H1 (cell line): ENCODE measurements at regions of chr16 and their contacts with region 1.

Region 1: GRCh38 chr16:27639561-27640276 is 89.8 kb downstream of the KATNIP start:
- DNase-seq: peak in 1 of 2 experiments; percentile 55
- H3K4me3 ChIP-seq: no peak overlapping the region
- H3K27ac ChIP-seq: no peak overlapping the region
- H3K4me1 ChIP-seq: peaks cover 0 to 9% (median 5%) of the 10 kb centered on the region in 4 experiments; a peak in 6 of 7 replicates
- H3K27me3 ChIP-seq: no peaks in the 10 kb centered on the region
- CTCF ChIP-seq: peak; percentile 60 to 84 (median 75)
- EP300 ChIP-seq: no peak
- POLR2A ChIP-seq: no peak
- RAD21 ChIP-seq: peak; percentile 77 to 78

Region 2: DNA sequence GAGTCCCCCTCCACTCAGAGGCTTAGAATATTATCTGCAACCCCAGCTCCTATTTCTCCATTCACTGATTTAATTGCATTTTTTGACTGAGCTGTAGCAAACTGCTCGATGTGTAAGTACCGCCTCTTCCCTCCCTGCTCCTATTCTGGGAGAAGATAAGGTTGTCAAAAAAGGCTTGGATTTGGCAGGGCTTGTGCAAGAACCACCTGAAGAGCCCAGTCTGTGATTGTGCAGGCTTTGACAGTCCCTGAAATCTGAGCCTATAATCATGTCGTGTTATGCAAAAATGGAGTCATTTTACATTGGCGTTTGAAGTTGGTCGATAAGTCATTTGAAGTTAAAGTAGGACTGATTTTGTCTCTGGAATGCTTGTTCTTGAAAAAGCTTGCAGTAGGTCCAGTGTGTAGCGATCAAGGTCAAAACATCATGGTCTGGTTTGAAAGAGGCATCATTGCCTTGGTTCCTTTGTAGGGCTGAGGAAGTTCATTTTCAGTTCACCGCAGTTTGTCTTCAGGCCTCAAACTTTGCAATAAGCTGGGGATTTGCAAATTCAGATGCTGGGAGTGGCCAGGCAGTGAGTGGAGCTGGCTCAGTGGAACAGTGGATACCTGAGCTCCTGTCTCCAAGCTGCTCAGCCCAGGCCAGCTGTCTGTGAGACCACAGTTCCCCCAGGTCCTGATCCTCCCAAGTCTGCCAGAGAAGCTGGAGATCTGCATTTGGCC is 21.0 kb before region 1 on chr16:
- CTCF ChIA-PET with region 1: interaction called, 14 read pairs
- POLR2A ChIA-PET with region 1: no interaction called
- DNase-seq: no peak
- H3K4me3 ChIP-seq: no peak overlapping the region
- H3K27ac ChIP-seq: no peak overlapping the region
- H3K4me1 ChIP-seq: peaks cover 0 to 2% (median 0%) of the 10 kb centered on the region in 4 experiments; a peak in 1 of 7 replicates
- H3K27me3 ChIP-seq: no peaks in the 10 kb centered on the region
- CTCF ChIP-seq: no peak
- EP300 ChIP-seq: no peak
- POLR2A ChIP-seq: no peak
- RAD21 ChIP-seq: no peak

Region 3: GRCh38 chr16:27628241-27628942 is 11.3 kb before region 1 on chr16:
- CTCF ChIA-PET with region 1: interaction called, 35 read pairs
- POLR2A ChIA-PET with region 1: interaction called, 4 read pairs
- DNase-seq: no peak
- H3K4me3 ChIP-seq: no peak overlapping the region
- H3K27ac ChIP-seq: no peak overlapping the region
- H3K4me1 ChIP-seq: peaks cover 0 to under 1% (median 0%) of the 10 kb centered on the region in 4 experiments; a peak in 1 of 7 replicates
- H3K27me3 ChIP-seq: no peaks in the 10 kb centered on the region
- CTCF ChIP-seq: no peak
- EP300 ChIP-seq: no peak
- POLR2A ChIP-seq: no peak
- RAD21 ChIP-seq: no peak

Region 4: GRCh38 chr16:27654212-27654611 is 14.5 kb after region 1 on chr16:
- CTCF ChIA-PET with region 1: interaction called, 11 read pairs
- POLR2A ChIA-PET with region 1: no interaction called
- DNase-seq: no peak
- H3K4me3 ChIP-seq: no peak overlapping the region
- H3K27ac ChIP-seq: no peak overlapping the region
- H3K4me1 ChIP-seq: peaks cover 2 to 8% (median 3%) of the 10 kb centered on the region in 4 experiments; a peak in 5 of 7 replicates
- H3K27me3 ChIP-seq: no peaks in the 10 kb centered on the region
- CTCF ChIP-seq: no peak
- EP300 ChIP-seq: no peak
- POLR2A ChIP-seq: no peak
- RAD21 ChIP-seq: no peak

Region 5: GRCh38 chr16:27671410-27671809 is 31.7 kb after region 1 on chr16:
- CTCF ChIA-PET with region 1: interaction called, 11 read pairs
- POLR2A ChIA-PET with region 1: no interaction called
- DNase-seq: no peak
- H3K4me3 ChIP-seq: no peak overlapping the region
- H3K27ac ChIP-seq: no peak overlapping the region
- H3K4me1 ChIP-seq: no peaks in the 10 kb centered on the region; a peak in 2 of 7 replicates
- H3K27me3 ChIP-seq: no peaks in the 10 kb centered on the region
- CTCF ChIP-seq: peak; percentile 45 to 65 (median 60)
- EP300 ChIP-seq: no peak
- POLR2A ChIP-seq: no peak
- RAD21 ChIP-seq: peak; percentile 28 to 40; a peak in 2 of 4 replicates

Region 6: GRCh38 chr16:27690608-27691007 is 50.9 kb after region 1 on chr16:
- CTCF ChIA-PET with region 1: interaction called, 11 read pairs
- POLR2A ChIA-PET with region 1: no interaction called
- DNase-seq: peak in 1 of 2 experiments; percentile 77
- H3K4me3 ChIP-seq: no peak overlapping the region
- H3K27ac ChIP-seq: no peak overlapping the region
- H3K4me1 ChIP-seq: no peaks in the 10 kb centered on the region
- H3K27me3 ChIP-seq: no peaks in the 10 kb centered on the region
- CTCF ChIP-seq: peak; percentile 69 to 94 (median 94)
- EP300 ChIP-seq: no peak
- POLR2A ChIP-seq: no peak
- RAD21 ChIP-seq: peak; percentile 83

Region 7: GRCh38 chr16:27951489-27952120 is 311.9 kb after region 1 on chr16:
- CTCF ChIA-PET with region 1: no interaction called
- POLR2A ChIA-PET with region 1: no interaction called
- DNase-seq: no peak
- H3K4me3 ChIP-seq: no peak overlapping the region
- H3K27ac ChIP-seq: no peak overlapping the region
- H3K4me1 ChIP-seq: no peaks in the 10 kb centered on the region
- H3K27me3 ChIP-seq: no peaks in the 10 kb centered on the region; a peak in 1 of 7 replicates
- CTCF ChIP-seq: no peak
- EP300 ChIP-seq: no peak
- POLR2A ChIP-seq: no peak
- RAD21 ChIP-seq: no peak